ENCODE measurements at regions of chrX and their contacts with region 1.

Region 1: DNA sequence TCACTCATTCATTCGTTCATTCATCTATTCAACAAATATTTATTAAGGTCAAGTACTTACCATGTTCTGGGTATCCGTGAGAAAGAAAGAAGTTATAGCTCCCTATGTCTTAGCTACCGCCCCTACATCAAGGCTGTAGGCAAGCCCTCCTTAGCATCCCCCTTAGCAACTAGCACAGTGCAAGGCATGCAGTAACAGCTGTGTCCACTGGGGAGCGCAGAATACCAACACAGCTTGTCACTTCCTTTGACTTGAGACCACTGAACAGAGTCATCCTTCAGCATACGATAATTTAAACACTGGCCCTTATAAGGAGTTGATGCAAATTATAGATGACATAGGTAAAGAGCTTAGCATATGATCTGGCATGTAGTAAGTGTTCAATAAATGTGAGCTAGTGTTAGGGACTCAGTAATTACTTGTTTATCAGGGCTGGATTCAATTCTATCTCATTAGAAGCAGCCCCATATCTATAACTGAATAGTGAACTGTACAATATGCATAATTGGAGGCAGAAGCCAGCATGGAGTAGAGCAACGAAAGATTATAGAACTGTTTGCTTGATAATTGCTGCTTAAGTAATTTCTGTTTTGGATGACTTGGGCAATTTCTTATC is 8.7 kb downstream of the KIAA1210 start:
- DNase-seq: no peak
- H3K4me3 ChIP-seq: no peak overlapping the region
- CTCF ChIP-seq: peak; percentile 74

Region 2: DNA sequence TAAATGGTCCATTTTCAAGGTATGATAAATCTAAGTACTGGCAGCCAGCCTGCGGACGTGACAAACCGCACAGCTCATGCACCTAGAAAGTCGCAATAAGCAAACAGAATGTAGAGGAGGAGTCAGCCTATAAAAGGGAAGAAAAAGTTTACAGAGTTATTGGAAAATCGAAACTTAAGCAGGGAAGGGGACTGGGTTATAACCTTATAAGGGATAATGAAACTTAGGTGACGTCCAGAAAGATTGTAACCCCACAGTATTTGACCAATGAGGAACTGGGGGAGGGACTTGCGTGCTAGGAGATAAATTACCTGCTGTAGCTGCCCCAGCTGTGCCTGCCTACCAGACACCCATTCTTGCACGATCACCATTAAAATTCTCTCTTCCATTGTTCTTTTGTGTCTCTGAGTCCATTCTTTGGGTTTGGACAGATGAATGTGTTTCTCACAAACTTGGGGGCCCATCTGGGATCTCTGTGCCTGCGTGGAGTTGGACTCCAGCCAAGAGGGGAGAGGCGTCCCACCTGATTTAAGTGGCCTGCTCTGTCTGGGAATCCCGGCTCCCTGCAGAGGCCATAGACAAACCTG is 234.2 kb before region 1 on chrX:
- CTCF ChIA-PET with region 1: no interaction called
- POLR2A ChIA-PET with region 1: no interaction called
- DNase-seq: no peak
- H3K4me3 ChIP-seq: no peak overlapping the region
- CTCF ChIP-seq: no peak

Region 3: GRCh38 chrX:118973389-118974087 is 145.3 kb before region 1 on chrX:
- CTCF ChIA-PET with region 1: no interaction called
- POLR2A ChIA-PET with region 1: no interaction called
- DNase-seq: no peak
- H3K4me3 ChIP-seq: no peak overlapping the region
- CTCF ChIP-seq: no peak

Region 4: GRCh38 chrX:119130911-119131310 is 12.0 kb after region 1 on chrX:
- CTCF ChIA-PET with region 1: interaction called, 15 read pairs
- POLR2A ChIA-PET with region 1: no interaction called
- DNase-seq: no peak
- H3K4me3 ChIP-seq: no peak overlapping the region
- CTCF ChIP-seq: no peak

Region 5: DNA sequence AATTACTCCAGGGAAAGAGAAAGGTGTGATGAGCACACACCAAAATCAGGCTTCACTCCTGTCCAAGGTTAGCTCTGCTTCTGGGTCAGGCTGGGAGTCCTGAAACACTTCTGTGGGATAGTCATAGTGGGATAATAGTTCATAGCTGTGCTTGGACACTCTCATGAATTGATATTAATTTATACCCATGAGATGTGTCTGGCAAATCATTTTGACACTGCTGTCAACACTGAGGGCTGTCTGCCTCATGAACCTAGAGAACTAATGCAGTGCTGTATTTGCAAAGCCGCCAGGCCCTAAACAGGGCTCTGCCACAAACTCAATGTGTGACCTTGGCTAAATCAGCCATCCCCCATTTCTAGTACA is 92.7 kb after region 1 on chrX:
- CTCF ChIA-PET with region 1: interaction called, 26 read pairs
- POLR2A ChIA-PET with region 1: no interaction called
- DNase-seq: no peak
- H3K4me3 ChIP-seq: no peak overlapping the region
- CTCF ChIP-seq: no peak

Region 6: DNA sequence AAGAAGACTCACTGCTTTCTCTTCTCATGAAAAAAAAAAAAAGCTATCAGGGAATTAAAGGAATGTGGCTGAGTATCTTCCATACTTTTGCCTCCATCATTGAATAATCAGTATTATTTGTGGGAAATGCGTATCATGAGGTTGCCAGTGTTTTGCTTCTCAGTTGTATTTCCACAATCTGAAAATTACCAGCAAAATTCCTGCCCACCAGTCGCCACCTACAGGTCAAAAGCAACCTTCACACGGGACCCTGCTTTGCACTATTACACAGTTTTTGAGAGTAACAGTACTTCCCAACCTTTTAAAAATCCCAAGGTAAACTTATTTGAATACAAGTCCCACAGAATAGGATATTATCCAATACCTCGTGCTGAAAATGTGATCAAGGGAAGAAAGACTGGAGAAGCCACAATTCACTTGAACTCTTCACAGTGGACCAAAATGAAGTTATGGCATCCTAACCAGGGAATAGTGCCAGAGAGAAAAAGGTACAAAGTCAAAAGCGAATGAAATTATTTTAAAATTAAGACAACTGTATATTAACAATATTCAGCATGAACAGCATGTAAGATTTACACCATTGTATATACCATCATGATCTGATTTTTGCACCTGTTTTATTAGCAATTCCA is 147.6 kb after region 1 on chrX:
- CTCF ChIA-PET with region 1: interaction called, 12 read pairs
- POLR2A ChIA-PET with region 1: no interaction called
- DNase-seq: no peak
- H3K4me3 ChIP-seq: no peak overlapping the region
- CTCF ChIP-seq: peak; percentile 57

Measured in AG04449 (cell line).